CD8-positive, alpha-beta T cell (primary cell): ENCODE measurements at regions of chr13 and their contacts with region 1.

Region 1: DNA sequence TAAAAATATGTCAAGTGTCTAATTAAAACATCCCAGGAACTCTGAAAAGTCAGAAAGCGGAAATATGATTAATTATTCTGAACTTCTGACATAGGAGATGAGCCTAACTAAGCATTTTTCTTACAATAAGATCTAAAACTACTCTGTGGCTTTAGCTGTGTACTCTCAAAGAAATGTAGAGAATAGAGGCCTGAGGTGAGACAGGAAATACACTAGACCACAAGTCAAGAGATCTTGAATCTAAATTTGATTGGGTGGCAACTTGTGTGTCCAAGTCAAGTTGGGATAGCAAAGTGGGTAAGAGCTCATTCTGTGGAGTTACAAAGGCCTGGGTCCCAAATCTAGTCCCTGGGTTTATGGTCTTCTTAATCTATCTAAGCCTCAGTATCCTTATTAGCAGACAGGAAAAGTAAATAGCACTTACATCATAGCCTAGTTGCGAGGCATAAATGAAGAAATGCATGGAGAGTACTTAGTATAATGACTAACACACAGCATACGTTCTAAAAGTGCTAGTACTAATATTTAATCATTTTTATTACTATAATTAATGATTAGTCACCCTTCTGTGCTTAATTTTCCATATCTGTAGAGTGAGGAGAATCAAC is 9.4 kb upstream of the LRRC63 start:
- DNase-seq: peak in 1 of 9 experiments; percentile 61
- ATAC-seq: peak; percentile 73
- H3K4me3 ChIP-seq: no peak overlapping the region
- H3K4me3 Mint-ChIP-seq: peak overlapping the region; percentile 35
- H3K27ac ChIP-seq: peak overlapping the region in 1 of 2 experiments; percentile 49
- H3K27ac Mint-ChIP-seq: peak overlapping the region; percentile 83
- H3K4me1 ChIP-seq: peaks cover 36% of the 10 kb centered on the region
- H3K4me1 Mint-ChIP-seq: peaks cover 48% of the 10 kb centered on the region
- H3K27me3 ChIP-seq: no peaks in the 10 kb centered on the region
- H3K27me3 Mint-ChIP-seq: no peaks in the 10 kb centered on the region
- CTCF ChIP-seq: no peak

Region 2: GRCh38 chr13:46041419-46041839 is 160.9 kb before region 1 on chr13:
- CTCF ChIA-PET with region 1: no interaction called
- POLR2A ChIA-PET with region 1: no interaction called
- intact Hi-C with region 1: no loop called
- DNase-seq: no peak
- ATAC-seq: no peak
- H3K4me3 ChIP-seq: no peak overlapping the region
- H3K4me3 Mint-ChIP-seq: no peak overlapping the region
- H3K27ac ChIP-seq: no peak overlapping the region
- H3K27ac Mint-ChIP-seq: no peak overlapping the region
- H3K4me1 ChIP-seq: no peaks in the 10 kb centered on the region
- H3K4me1 Mint-ChIP-seq: peaks cover 27% of the 10 kb centered on the region
- H3K27me3 ChIP-seq: no peaks in the 10 kb centered on the region
- H3K27me3 Mint-ChIP-seq: no peaks in the 10 kb centered on the region
- CTCF ChIP-seq: no peak

Region 3: GRCh38 chr13:46168341-46168740 is 34.0 kb before region 1 on chr13:
- CTCF ChIA-PET with region 1: interaction called, 5 read pairs
- POLR2A ChIA-PET with region 1: interaction called, 11 read pairs
- intact Hi-C with region 1: no loop called
- DNase-seq: peak in 4 of 9 experiments; percentile 29 to 86 (median 59)
- ATAC-seq: peak; percentile 15
- H3K4me3 ChIP-seq: peak overlapping the region; percentile 9 to 15
- H3K4me3 Mint-ChIP-seq: peak overlapping the region; percentile 68
- H3K27ac ChIP-seq: peak overlapping the region; percentile 14 to 83
- H3K27ac Mint-ChIP-seq: peak overlapping the region; percentile 89
- H3K4me1 ChIP-seq: peaks cover 93% of the 10 kb centered on the region
- H3K4me1 Mint-ChIP-seq: peaks cover 90% of the 10 kb centered on the region
- H3K27me3 ChIP-seq: no peaks in the 10 kb centered on the region
- H3K27me3 Mint-ChIP-seq: no peaks in the 10 kb centered on the region
- CTCF ChIP-seq: no peak

Region 4: GRCh38 chr13:46176756-46177155 is 25.5 kb before region 1 on chr13:
- CTCF ChIA-PET with region 1: interaction called, 8 read pairs
- POLR2A ChIA-PET with region 1: interaction called, 11 read pairs
- intact Hi-C with region 1: no loop called
- DNase-seq: peak in 1 of 9 experiments; percentile 62
- ATAC-seq: no peak
- H3K4me3 ChIP-seq: peak overlapping the region; percentile 40
- H3K4me3 Mint-ChIP-seq: peak overlapping the region; percentile 79
- H3K27ac ChIP-seq: peak overlapping the region; percentile 51 to 94
- H3K27ac Mint-ChIP-seq: peak overlapping the region; percentile 94
- H3K4me1 ChIP-seq: peaks cover 66% of the 10 kb centered on the region
- H3K4me1 Mint-ChIP-seq: peaks cover 66% of the 10 kb centered on the region
- H3K27me3 ChIP-seq: no peaks in the 10 kb centered on the region
- H3K27me3 Mint-ChIP-seq: no peaks in the 10 kb centered on the region
- CTCF ChIP-seq: no peak